PC-3 (cell line): ENCODE measurements at regions of chr7 and their contacts with region 1.

Region 1: DNA sequence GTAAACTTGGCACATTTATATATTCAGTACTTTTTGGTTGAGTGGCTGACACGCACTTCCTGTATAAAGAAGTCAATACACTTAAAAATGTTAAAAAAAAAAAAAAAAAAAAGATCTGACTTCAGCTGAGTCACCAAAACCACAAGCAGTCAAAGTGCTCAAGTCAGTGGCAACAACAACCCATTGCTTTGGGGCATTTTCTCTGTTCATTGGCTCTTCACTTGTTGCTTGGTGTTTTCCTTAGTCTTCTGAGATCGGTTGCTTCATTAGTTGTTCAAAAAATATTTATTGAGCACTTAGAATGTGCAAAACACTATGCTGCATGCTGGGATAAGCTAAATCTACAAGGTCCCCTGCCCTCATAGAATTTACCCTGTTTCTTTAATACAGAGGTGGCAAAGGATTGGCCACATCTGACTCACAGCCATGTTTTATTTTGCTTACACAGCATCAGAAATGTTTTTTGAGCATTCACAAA is 63.7 kb downstream of the ZNRF2 start:
- DNase-seq: peak; percentile 80
- ATAC-seq: peak; percentile 85
- H3K4me3 ChIP-seq: peak overlapping the region; percentile 54
- H3K27ac ChIP-seq: peak overlapping the region; percentile 81
- H3K4me1 ChIP-seq: peaks cover 37% of the 10 kb centered on the region
- H3K27me3 ChIP-seq: no peaks in the 10 kb centered on the region
- CTCF ChIP-seq: no peak

Region 2: DNA sequence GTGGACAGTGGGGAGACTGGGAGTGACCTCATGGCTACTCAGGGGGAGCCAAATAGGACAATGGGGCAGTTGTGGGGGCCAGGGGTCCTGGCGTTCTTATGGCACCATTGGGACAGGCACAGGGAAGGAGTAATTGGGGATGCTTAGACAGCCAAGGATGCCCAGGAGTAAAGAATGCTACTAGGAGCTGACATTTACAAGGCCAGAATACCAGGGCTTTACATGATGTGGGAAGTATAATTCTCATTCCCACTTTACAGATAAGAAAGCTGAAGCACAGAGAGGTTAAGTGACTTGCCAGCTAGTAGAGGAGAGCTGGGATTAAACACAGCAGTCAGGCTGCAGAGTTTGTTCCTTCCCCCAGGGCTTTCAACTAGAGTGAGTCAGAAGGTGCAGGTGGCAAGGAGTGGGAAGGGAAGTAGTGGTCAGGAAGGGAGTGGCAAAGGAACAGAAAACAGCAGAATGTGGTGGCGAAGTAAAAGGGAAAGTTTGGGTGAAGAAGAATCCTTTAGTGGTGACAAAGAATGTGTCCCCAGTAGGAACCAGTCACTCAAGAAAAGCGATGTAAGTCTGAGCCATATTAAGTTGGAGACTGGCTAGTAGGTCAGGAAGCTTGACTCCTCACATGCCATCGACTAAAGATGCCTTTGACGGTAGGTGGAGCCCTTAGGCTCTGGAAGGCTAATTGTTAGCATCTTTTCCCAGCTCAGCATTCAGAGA is 1234.6 kb before region 1 on chr7:
- CTCF ChIA-PET with region 1: no interaction called
- POLR2A ChIA-PET with region 1: interaction called, 16 read pairs
- intact Hi-C with region 1: no loop called
- DNase-seq: peak; percentile 89
- ATAC-seq: peak; percentile 90
- H3K4me3 ChIP-seq: peak overlapping the region; percentile 1; the same call in 1 of the 2 replicates
- H3K27ac ChIP-seq: peak overlapping the region; percentile 76
- H3K4me1 ChIP-seq: peaks cover 51% of the 10 kb centered on the region
- H3K27me3 ChIP-seq: no peaks in the 10 kb centered on the region
- CTCF ChIP-seq: peak; percentile 74

Region 3: GRCh38 chr7:30276203-30276900 is 71.8 kb before region 1 on chr7:
- CTCF ChIA-PET with region 1: interaction called, 4 read pairs
- POLR2A ChIA-PET with region 1: no interaction called
- intact Hi-C with region 1: loop called (anchors 1 kb)
- DNase-seq: peak; percentile 82
- ATAC-seq: peak; percentile 93
- H3K4me3 ChIP-seq: no peak overlapping the region
- H3K27ac ChIP-seq: no peak overlapping the region
- H3K4me1 ChIP-seq: no peaks in the 10 kb centered on the region
- H3K27me3 ChIP-seq: no peaks in the 10 kb centered on the region
- CTCF ChIP-seq: peak; percentile 87

Region 4: DNA sequence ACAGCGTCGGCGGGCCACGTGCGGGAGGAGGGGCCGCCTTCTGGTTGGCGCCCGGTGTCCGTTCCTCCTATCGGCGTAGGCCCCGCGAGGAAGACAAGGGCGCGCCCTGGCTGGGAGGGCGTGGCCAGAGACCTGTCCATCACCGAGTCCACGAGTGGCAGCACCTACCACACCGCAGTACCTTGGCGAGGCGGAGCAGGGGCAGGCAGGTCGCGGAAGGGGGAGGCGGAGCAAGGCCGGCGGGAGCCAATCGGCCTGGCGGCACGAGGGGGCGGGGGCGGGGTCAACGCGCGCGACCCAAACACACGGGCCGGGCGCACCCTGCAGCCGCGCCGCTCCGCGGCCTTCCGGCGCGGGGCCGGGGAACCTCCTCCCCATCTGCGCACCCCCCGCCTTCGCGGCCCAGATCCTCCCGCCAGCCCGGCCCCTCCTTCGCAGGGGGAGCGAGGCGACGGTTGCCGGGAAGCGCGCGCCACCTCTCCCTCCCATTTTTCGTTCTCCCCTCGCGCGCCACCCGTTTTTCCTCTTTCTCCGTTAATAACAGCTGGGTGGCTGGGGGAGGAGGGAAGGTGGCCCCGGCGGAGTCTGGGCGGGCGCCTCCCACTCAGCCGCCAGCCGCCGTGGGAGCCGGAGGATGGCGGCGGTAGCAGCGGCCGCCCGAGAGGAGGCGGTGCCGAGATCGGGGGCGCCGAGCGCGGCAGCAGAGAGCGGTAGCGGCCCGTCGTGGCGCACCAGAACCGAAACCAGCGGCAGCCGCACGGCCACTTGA is 63.6 kb before region 1 on chr7 and contains the start of gene ZNRF2:
- CTCF ChIA-PET with region 1: no interaction called
- POLR2A ChIA-PET with region 1: no interaction called
- intact Hi-C with region 1: loop called (anchors 1 kb)
- DNase-seq: peak; percentile 99
- ATAC-seq: peak; percentile 89
- H3K4me3 ChIP-seq: peak within 1 kb of the TSS; percentile 83
- H3K27ac ChIP-seq: peak within 1 kb of the TSS; percentile 64
- H3K4me1 ChIP-seq: peaks cover 8% of the 10 kb centered on the region
- H3K27me3 ChIP-seq: no peaks in the 10 kb centered on the region
- CTCF ChIP-seq: peak; percentile 46; the same call in 1 of the 2 replicates
- total RNA-seq, gene ZNRF2: 13.1 and 15.8 TPM in 2 replicates

Region 5: GRCh38 chr7:30322271-30323005 is 25.7 kb before region 1 on chr7:
- CTCF ChIA-PET with region 1: no interaction called
- POLR2A ChIA-PET with region 1: interaction called, 3 read pairs
- intact Hi-C with region 1: loop called (anchors 2 kb)
- DNase-seq: no peak
- ATAC-seq: peak; percentile 25
- H3K4me3 ChIP-seq: peak overlapping the region; percentile 45
- H3K27ac ChIP-seq: peak overlapping the region; percentile 53
- H3K4me1 ChIP-seq: peaks cover 59% of the 10 kb centered on the region
- H3K27me3 ChIP-seq: no peaks in the 10 kb centered on the region
- CTCF ChIP-seq: no peak

Region 6: GRCh38 chr7:30330134-30331111 is 17.7 kb before region 1 on chr7:
- CTCF ChIA-PET with region 1: interaction called, 5 read pairs
- POLR2A ChIA-PET with region 1: no interaction called
- intact Hi-C with region 1: loop called (anchors 2 kb)
- DNase-seq: no peak
- ATAC-seq: peak; percentile 19; the same call in 1 of the 2 replicates
- H3K4me3 ChIP-seq: no peak overlapping the region
- H3K27ac ChIP-seq: no peak overlapping the region
- H3K4me1 ChIP-seq: peaks cover 26% of the 10 kb centered on the region
- H3K27me3 ChIP-seq: no peaks in the 10 kb centered on the region
- CTCF ChIP-seq: no peak

Region 7: GRCh38 chr7:30412810-30413504 is 64.8 kb after region 1 on chr7:
- CTCF ChIA-PET with region 1: no interaction called
- POLR2A ChIA-PET with region 1: no interaction called
- intact Hi-C with region 1: loop called (anchors 1 kb)
- DNase-seq: peak; percentile 85
- ATAC-seq: peak; percentile 95
- H3K4me3 ChIP-seq: no peak overlapping the region
- H3K27ac ChIP-seq: no peak overlapping the region
- H3K4me1 ChIP-seq: no peaks in the 10 kb centered on the region
- H3K27me3 ChIP-seq: no peaks in the 10 kb centered on the region
- CTCF ChIP-seq: peak; percentile 83

Region 8: DNA sequence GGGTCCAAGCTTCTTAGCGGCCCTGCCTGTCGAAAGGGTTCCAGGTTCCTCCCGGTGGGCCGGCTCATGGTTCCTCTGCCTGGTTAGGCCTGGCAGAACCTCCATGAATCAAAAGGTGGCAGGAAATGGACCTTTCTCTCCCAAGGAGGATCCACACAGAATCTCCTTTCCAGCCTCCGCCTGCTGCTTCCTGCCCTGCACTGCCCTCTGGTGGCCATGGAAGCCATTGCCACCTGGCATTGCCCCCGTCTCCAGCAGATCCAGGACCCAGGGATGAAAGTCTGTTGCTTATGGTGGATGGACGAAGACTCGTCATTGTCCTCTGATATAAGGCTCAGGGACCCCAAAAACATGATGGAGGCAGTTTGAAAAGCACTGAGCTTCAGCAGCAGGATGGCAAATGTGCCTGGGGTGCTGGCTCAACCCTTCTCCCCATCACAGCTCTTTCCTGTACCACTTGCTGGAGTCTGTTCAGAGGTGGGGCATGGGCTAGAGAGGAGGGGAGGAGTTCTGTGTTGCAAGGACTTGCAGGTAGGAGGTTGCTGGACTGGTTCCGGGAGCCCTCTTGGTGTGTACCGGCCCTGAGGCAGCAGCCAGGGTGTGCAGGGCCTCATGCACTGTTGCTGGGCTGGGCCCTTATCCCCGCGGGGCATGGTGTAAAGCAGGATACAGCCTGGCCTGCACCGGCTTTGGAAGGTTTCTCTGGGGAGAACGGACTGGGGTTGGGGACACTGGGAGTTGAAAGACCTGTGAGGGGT is 392.5 kb after region 1 on chr7:
- CTCF ChIA-PET with region 1: no interaction called
- POLR2A ChIA-PET with region 1: no interaction called
- intact Hi-C with region 1: no loop called
- DNase-seq: peak; percentile 80
- ATAC-seq: peak; percentile 85
- H3K4me3 ChIP-seq: no peak overlapping the region
- H3K27ac ChIP-seq: no peak overlapping the region
- H3K4me1 ChIP-seq: no peaks in the 10 kb centered on the region
- H3K27me3 ChIP-seq: peaks cover 18% of the 10 kb centered on the region
- CTCF ChIP-seq: peak; percentile 94